ENCODE measurements at regions of chr2 and their contacts with region 1.

Region 1: DNA sequence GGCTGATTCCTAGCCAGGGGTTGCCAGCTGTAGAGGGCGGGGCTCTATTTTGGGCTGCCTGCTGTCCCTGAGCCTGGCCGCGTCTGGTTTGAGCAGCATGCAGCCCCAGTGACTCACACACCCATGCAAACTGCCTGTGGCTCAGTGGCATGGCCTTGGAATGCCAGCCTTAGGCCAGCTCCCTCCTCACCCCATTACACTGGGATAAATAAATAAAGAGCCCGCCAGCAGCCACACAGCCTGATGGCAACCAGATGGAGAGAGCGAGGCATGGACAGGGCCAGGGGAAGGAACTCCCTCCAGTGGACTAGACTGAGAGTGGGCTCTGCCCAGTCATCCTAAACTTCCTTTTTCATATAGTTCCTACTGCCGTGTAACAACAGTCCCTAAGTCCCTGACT is 18.3 kb downstream of the NHEJ1 start:
- DNase-seq: no peak
- H3K4me3 ChIP-seq: no peak overlapping the region
- H3K27ac ChIP-seq: no peak overlapping the region
- H3K4me1 ChIP-seq: no peaks in the 10 kb centered on the region
- CTCF ChIP-seq: no peak

Region 2: GRCh38 chr2:219104107-219105035 is 38.0 kb before region 1 on chr2:
- CTCF ChIA-PET with region 1: interaction called, 3 read pairs
- POLR2A ChIA-PET with region 1: no interaction called
- intact Hi-C with region 1: loop called (anchors 5 kb)
- DNase-seq: peak; percentile 49
- H3K4me3 ChIP-seq: no peak overlapping the region
- H3K27ac ChIP-seq: no peak overlapping the region
- H3K4me1 ChIP-seq: no peaks in the 10 kb centered on the region
- CTCF ChIP-seq: peak; percentile 86

Measured in OCI-LY7 (cell line).